Endothelial cell of umbilical vein (primary cell): ENCODE measurements at regions of chr2 and their contacts with region 1.

Region 1: DNA sequence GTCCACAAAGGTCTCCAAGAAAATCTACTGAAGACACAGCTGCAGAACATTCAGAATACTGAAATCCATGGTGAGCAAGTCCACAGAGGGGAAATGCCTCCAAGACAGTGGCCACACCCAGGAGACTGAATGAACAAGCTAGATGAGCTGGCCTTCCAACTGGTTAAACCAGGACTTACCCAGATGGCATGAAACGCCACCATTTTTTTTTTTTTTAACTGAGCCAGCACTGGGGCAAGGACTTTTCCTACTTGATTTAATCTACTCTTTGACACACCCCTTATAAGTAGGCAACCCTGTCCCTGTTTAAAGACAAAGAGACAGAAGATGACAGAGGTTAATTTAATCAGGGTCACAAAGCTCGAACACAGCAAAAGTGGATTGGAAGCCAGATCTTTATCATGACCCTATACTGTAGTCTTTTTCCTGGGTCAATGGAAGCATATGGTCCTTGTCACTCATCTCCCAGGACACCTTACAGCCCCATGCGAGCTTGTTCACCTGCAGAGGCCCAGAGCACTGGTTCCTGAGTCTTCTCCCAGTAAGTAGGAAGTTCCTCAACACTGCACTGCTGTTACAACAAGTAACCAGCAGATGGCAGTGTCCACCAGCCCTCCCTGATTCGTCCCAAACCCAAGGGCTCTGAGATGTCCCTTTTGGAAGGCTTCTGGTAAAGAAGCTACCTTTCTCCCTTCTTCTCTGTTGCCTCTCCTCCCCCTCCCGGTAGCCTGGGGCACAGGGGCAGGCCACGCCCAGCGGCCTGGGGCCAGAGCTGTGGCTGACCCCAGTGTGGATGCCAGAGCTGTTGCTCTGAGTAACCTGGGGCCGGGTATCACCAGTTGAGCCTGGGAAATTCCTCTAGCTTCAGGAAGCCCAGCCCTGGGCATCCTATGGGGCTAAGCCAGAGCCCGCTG is 5.6 kb upstream of the GDF7 start:
- DNase-seq: peak; percentile 80
- H3K4me3 ChIP-seq: no peak overlapping the region
- H3K27ac ChIP-seq: no peak overlapping the region
- H3K4me1 ChIP-seq: peaks cover 8% of the 10 kb centered on the region
- H3K27me3 ChIP-seq: peaks cover 57 to 64% of the 10 kb centered on the region in 2 experiments
- CTCF ChIP-seq: peak; percentile 88 to 92
- POLR2A ChIP-seq: peak; percentile 45

Region 2: GRCh38 chr2:20595431-20596192 is 65.7 kb before region 1 on chr2:
- CTCF ChIA-PET with region 1: no interaction called
- POLR2A ChIA-PET with region 1: no interaction called
- dilution Hi-C with region 1: no loop called
- intact Hi-C with region 1: no loop called
- DNase-seq: peak; percentile 65
- H3K4me3 ChIP-seq: no peak overlapping the region
- H3K27ac ChIP-seq: peak overlapping the region; percentile 95
- H3K4me1 ChIP-seq: peaks cover 56% of the 10 kb centered on the region
- H3K27me3 ChIP-seq: no peaks in the 10 kb centered on the region
- CTCF ChIP-seq: no peak
- POLR2A ChIP-seq: peak; percentile 43

Region 3: DNA sequence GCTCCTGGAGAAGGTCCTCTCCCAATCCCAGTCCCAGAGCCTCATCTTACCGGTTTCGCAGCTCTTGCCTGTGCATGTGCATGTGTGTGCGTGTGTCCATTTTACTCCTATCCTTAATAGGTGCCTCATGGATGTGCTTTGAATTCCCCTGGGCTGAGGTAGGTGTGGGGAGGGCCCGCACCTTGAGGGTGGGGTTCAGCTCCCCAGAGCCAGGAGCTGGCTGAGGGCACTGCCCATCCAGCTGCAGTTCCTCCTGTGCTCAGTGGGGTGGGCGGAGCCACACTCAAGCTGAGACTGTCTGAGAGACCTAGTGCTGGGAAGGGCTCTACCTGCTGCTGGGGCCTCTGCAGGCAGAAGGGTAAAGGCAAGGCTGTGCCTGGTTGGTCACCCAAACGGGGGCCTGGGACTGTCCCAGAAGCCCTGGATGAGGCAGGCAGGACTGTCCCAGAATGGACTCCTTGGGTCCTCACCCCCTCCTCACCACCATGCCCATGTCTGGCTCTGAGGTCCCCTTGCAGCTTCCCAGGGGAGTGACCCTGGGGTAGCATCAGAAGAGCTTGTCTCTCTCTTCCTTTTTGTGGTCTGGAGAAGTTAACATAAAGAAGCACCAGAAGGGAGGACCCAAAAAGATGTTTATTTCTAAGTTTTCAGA is 14.5 kb after region 1 on chr2:
- CTCF ChIA-PET with region 1: interaction called, 71 read pairs
- POLR2A ChIA-PET with region 1: no interaction called
- dilution Hi-C with region 1: no loop called
- intact Hi-C with region 1: no loop called
- DNase-seq: no peak
- H3K4me3 ChIP-seq: no peak overlapping the region
- H3K27ac ChIP-seq: no peak overlapping the region
- H3K4me1 ChIP-seq: peaks cover 15% of the 10 kb centered on the region
- H3K27me3 ChIP-seq: peaks cover 9 to 11% of the 10 kb centered on the region in 2 experiments
- CTCF ChIP-seq: no peak
- POLR2A ChIP-seq: no peak

Region 4: DNA sequence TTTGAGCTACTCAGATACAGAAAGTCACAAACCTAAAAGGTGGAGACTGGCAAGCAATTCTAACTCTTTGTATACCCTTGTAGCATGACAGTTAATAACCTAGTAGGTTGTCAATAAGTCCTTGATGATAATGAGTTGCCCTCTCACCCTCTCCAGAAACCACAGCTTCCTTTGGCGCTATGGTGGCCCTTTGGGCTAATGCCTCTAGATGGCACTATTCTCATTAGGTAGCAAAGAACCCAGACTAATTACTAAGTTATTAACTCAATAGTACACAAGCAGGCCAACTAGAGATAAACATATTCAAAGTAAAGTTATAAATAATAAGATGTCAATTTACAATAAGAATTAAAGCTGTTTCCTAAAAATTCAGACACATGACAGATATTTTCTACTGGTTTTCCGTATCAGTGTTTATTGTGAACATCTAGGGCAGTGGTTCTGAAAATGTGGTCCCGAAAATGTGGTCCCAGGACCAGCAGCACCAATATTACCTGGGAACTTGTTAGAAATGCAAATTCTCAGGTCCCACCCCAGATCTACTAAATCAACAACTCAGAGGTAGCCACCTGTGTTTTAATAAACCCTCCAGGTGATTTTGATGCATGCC is 120.4 kb after region 1 on chr2:
- CTCF ChIA-PET with region 1: interaction called, 24 read pairs
- POLR2A ChIA-PET with region 1: no interaction called
- dilution Hi-C with region 1: no loop called
- intact Hi-C with region 1: no loop called
- DNase-seq: peak; percentile 38
- H3K4me3 ChIP-seq: no peak overlapping the region
- H3K27ac ChIP-seq: no peak overlapping the region
- H3K4me1 ChIP-seq: no peaks in the 10 kb centered on the region
- H3K27me3 ChIP-seq: no peaks in the 10 kb centered on the region
- CTCF ChIP-seq: peak; percentile 54 to 68
- POLR2A ChIP-seq: no peak

Region 5: GRCh38 chr2:20942646-20943125 is 281.4 kb after region 1 on chr2:
- CTCF ChIA-PET with region 1: interaction called, 11 read pairs
- POLR2A ChIA-PET with region 1: no interaction called
- dilution Hi-C with region 1: no loop called
- intact Hi-C with region 1: no loop called
- DNase-seq: no peak
- H3K4me3 ChIP-seq: no peak overlapping the region
- H3K27ac ChIP-seq: no peak overlapping the region
- H3K4me1 ChIP-seq: no peaks in the 10 kb centered on the region
- H3K27me3 ChIP-seq: no peaks in the 10 kb centered on the region
- CTCF ChIP-seq: no peak
- POLR2A ChIP-seq: no peak

Region 6: DNA sequence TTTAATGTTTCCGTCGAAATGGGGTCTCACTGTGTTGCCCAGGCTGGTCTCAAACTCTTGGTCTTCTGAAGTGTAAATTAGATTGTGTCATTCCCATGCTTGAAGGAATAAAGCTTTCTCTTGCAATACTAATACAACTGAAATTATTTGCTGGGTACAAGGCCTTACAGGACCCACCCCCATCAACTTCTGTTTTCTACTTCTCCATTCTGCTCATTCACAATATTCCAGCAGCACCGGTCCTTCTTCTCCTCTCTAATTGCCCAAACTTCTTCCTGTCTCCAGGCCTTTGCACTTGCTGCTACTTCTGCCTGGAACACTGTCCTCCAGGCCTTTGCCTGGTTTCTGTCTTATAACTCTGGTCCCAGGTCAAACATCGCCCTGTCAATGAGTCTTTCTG is 308.7 kb after region 1 on chr2:
- CTCF ChIA-PET with region 1: interaction called, 531 read pairs
- POLR2A ChIA-PET with region 1: no interaction called
- dilution Hi-C with region 1: no loop called
- intact Hi-C with region 1: no loop called
- DNase-seq: no peak
- H3K4me3 ChIP-seq: no peak overlapping the region
- H3K27ac ChIP-seq: no peak overlapping the region
- H3K4me1 ChIP-seq: no peaks in the 10 kb centered on the region
- H3K27me3 ChIP-seq: peaks cover 0 to 4% of the 10 kb centered on the region in 2 experiments
- CTCF ChIP-seq: no peak
- POLR2A ChIP-seq: no peak

Region 7: GRCh38 chr2:21118302-21118920 is 457.1 kb after region 1 on chr2:
- CTCF ChIA-PET with region 1: interaction called, 27 read pairs
- POLR2A ChIA-PET with region 1: no interaction called
- dilution Hi-C with region 1: no loop called
- intact Hi-C with region 1: loop called (anchors 1 kb)
- DNase-seq: peak; percentile 59
- H3K4me3 ChIP-seq: no peak overlapping the region
- H3K27ac ChIP-seq: no peak overlapping the region
- H3K4me1 ChIP-seq: no peaks in the 10 kb centered on the region
- H3K27me3 ChIP-seq: no peaks in the 10 kb centered on the region
- CTCF ChIP-seq: peak; percentile 18 to 45
- POLR2A ChIP-seq: no peak